Panc1 (cell line): ENCODE measurements at regions of chr6 and their contacts with region 1.

Region 1: DNA sequence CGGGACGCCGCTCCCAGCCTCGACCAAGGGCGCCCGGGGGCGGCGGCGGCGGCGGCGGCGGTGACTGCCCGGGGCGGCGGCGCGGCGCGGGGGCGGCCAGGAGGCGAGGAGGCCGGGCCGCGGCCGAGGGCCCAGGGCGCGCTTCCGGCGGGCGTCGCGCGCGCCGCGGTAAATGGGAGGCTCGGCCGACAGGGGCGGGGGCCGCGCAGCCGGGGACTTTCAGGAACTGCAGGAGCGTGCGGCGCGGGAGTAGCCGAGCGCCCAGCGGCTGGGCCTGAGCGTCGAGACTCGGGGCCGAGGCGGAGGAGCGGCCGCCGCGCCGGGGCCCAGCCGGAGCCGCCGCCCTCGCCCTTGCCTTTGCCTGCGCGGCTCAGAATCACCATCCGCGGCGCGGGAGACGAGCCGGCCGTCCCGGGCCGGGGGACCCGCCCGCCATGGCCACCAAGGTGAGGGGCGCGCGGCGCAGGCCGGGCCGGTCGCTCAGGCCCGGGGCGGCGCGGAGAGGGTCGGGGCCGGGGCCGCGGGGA is at the start of gene SNX9:
- DNase-seq: no peak
- ATAC-seq: peak; percentile 90
- H3K4me3 ChIP-seq: peak within 1 kb of the TSS; percentile 68 to 71
- H3K27ac ChIP-seq: peak within 1 kb of the TSS; percentile 88
- H3K4me1 ChIP-seq: peaks cover 9% of the 10 kb centered on the region
- H3K27me3 ChIP-seq: no peaks in the 10 kb centered on the region
- CTCF ChIP-seq: no peak
- total RNA-seq, gene SNX9: 46.0 TPM

Region 2: GRCh38 chr6:157715765-157716164 is 107.3 kb before region 1 on chr6:
- CTCF ChIA-PET with region 1: no interaction called
- POLR2A ChIA-PET with region 1: no interaction called
- in situ Hi-C with region 1: no loop called
- intact Hi-C with region 1: no loop called
- DNase-seq: no peak
- ATAC-seq: no peak
- H3K4me3 ChIP-seq: no peak overlapping the region
- H3K27ac ChIP-seq: no peak overlapping the region
- H3K4me1 ChIP-seq: no peaks in the 10 kb centered on the region
- H3K27me3 ChIP-seq: no peaks in the 10 kb centered on the region
- CTCF ChIP-seq: no peak

Region 3: GRCh38 chr6:157764178-157765033 is 58.7 kb before region 1 on chr6:
- CTCF ChIA-PET with region 1: no interaction called
- POLR2A ChIA-PET with region 1: interaction called, 6 read pairs
- in situ Hi-C with region 1: no loop called
- intact Hi-C with region 1: loop called (anchors 2 kb)
- DNase-seq: peak; percentile 98
- ATAC-seq: peak; percentile 87
- H3K4me3 ChIP-seq: peak overlapping the region in 1 of 2 experiments; percentile 31; a peak in 2 of 4 replicates
- H3K27ac ChIP-seq: peak overlapping the region; percentile 94
- H3K4me1 ChIP-seq: peaks cover 57% of the 10 kb centered on the region
- H3K27me3 ChIP-seq: no peaks in the 10 kb centered on the region
- CTCF ChIP-seq: no peak

Region 4: GRCh38 chr6:157808405-157808950 is 14.6 kb before region 1 on chr6:
- CTCF ChIA-PET with region 1: interaction called, 10 read pairs
- POLR2A ChIA-PET with region 1: no interaction called
- in situ Hi-C with region 1: no loop called
- intact Hi-C with region 1: no loop called
- DNase-seq: no peak
- ATAC-seq: no peak
- H3K4me3 ChIP-seq: no peak overlapping the region
- H3K27ac ChIP-seq: no peak overlapping the region
- H3K4me1 ChIP-seq: no peaks in the 10 kb centered on the region
- H3K27me3 ChIP-seq: no peaks in the 10 kb centered on the region
- CTCF ChIP-seq: no peak